ENCODE measurements at regions of chr2 and their contacts with region 1.

Region 1: GRCh38 chr2:42663106-42663780 is 94.8 kb downstream of the MTA3 start:
- DNase-seq: peak; percentile 64 to 73
- H3K4me3 ChIP-seq: no peak overlapping the region
- H3K27ac ChIP-seq: no peak overlapping the region
- H3K4me1 ChIP-seq: no peaks in the 10 kb centered on the region
- H3K27me3 ChIP-seq: no peaks in the 10 kb centered on the region
- CTCF ChIP-seq: peak; percentile 100

Region 2: DNA sequence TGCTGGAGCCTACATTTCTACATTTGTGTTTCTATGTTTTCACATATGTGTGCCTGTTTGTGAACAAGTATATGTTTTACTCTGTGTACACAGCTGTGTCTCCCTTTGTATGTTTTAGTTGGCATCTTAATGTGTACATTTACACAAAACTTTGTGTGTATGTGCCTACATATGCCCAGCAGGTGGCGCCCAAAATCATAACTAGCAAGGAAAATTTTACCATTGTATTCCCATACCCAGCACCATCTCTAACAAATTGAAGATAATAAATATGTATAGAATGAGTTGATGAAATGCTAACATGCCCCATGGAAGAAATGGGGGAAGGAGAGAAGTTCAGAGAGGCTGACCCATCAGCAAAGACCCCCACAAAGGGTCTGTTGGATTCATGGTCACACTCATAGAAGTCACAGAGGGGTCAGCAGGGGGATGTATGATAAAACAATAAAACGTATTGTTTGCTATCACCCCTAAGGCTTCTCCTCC is 567.3 kb before region 1 on chr2:
- CTCF ChIA-PET with region 1: no interaction called
- POLR2A ChIA-PET with region 1: no interaction called
- intact Hi-C with region 1: loop called (anchors 1 kb)
- DNase-seq: peak; percentile 60 to 68
- H3K4me3 ChIP-seq: no peak overlapping the region
- H3K27ac ChIP-seq: no peak overlapping the region
- H3K4me1 ChIP-seq: no peaks in the 10 kb centered on the region
- H3K27me3 ChIP-seq: no peaks in the 10 kb centered on the region
- CTCF ChIP-seq: peak; percentile 98

Region 3: GRCh38 chr2:42342061-42342794 is 321.0 kb before region 1 on chr2:
- CTCF ChIA-PET with region 1: interaction called, 3 read pairs
- POLR2A ChIA-PET with region 1: no interaction called
- intact Hi-C with region 1: loop called (anchors 1 kb)
- DNase-seq: peak; percentile 79 to 89
- H3K4me3 ChIP-seq: no peak overlapping the region
- H3K27ac ChIP-seq: peak overlapping the region; percentile 10; the same call in 1 of the 2 replicates
- H3K4me1 ChIP-seq: peaks cover 18% of the 10 kb centered on the region
- H3K27me3 ChIP-seq: no peaks in the 10 kb centered on the region
- CTCF ChIP-seq: no peak

Region 4: DNA sequence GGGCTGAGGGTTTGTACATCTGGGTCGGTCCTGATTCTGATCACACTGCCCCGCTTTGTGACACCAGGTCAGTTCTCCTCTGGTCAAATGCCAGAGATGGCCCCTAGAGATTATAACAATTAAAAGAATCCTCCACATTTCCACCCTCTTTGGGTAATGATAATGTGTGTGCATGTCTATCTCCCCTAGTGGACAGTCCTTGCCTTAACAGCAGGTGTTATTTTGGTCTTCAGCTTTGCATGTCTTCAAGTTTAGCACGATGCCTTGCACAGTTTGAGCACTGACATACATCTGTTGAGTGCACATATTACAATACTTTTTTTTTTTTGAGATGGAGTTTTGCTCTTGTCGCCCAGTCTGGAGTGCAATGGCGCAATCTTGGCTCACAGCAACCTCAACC is 276.6 kb before region 1 on chr2:
- CTCF ChIA-PET with region 1: no interaction called
- POLR2A ChIA-PET with region 1: no interaction called
- intact Hi-C with region 1: loop called (anchors 2 kb)
- DNase-seq: no peak
- H3K4me3 ChIP-seq: no peak overlapping the region
- H3K27ac ChIP-seq: no peak overlapping the region
- H3K4me1 ChIP-seq: no peaks in the 10 kb centered on the region
- H3K27me3 ChIP-seq: no peaks in the 10 kb centered on the region
- CTCF ChIP-seq: peak; percentile 73

Region 5: DNA sequence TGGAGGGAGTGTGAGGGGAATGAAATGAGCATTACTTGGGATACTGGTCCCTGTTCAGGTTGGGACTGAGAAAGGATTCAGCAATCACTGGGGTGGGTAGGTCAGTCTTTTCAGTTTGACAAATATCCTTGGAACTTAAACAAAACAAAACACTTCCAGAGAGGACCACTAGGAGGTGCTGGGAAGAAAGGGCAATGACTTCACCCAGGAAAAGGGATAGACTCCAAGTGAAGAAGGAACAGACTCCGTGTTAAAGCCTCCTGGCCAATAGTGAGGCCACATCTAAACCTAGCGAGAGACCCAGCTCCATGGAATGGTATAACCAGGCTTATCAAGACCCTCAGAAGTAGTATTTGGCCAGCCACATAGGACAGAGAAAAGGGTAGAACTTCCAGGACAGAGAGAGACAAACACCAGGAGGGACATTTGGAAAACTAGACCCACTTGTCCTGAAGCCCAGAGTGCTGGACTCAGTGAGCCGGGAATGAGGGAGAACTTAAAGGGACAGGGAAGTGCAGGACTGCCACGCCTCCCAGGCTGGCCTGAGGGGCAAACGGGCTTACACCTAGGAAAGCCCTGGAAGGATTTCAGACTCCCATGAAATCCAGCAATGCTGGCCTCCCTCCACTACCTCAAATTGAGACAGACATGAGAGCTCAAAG is 149.9 kb before region 1 on chr2:
- CTCF ChIA-PET with region 1: no interaction called
- POLR2A ChIA-PET with region 1: no interaction called
- intact Hi-C with region 1: loop called (anchors 1 kb)
- DNase-seq: peak; percentile 18 to 56
- H3K4me3 ChIP-seq: no peak overlapping the region
- H3K27ac ChIP-seq: no peak overlapping the region
- H3K4me1 ChIP-seq: peaks cover 8% of the 10 kb centered on the region
- H3K27me3 ChIP-seq: no peaks in the 10 kb centered on the region
- CTCF ChIP-seq: peak; percentile 87